Ascending aorta (tissue), 2 donors: ENCODE measurements at regions of chr16 and their contacts with region 1.

Region 1: DNA sequence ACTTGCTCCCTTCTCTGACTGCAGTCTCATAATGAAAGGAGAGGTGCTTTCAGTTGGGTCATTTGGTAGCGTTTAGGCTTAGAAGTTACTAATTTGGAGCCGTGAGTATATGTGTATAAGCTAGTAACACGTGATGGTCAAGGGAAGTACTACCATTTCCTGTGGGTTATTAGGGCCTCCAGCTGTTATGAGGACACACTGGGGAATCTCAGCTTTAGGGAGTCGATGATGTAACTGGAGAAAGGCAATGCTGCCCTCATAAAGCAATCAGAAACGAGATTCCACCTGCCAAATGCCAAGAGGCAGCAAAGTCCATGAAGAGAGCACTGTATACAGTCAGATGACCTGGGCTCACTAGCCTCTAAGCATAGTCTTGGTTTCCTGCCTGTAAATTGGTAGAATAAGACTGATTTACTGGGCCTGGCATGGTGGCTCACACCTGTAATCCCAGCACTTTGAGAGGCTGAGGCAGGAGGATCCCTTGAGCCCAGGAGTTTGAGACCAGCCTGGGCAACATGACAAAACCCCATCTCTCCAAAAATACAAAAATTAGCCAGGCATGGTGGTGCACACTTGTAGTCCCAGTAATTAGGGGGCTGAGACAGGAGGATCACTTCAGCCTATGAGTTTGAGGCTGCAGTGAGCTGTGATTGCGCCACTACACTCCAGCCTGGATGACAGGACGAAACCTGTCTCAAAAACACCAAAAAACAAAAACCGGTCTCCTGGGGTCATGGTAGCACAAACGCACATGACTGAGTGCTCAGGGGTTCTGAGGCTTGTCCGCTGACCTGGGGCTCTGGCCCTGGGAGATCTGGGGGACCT is 53.0 kb downstream of the SF3B3 start:
- DNase-seq: peak in 1 of 2 donors; percentile 46
- H3K4me3 ChIP-seq: no peak overlapping the region
- H3K27ac ChIP-seq: peak overlapping the region; percentile 77 to 79
- H3K4me1 ChIP-seq: peaks cover 15 to 60% of the 10 kb centered on the region in 2 donors
- H3K27me3 ChIP-seq: no peaks in the 10 kb centered on the region
- CTCF ChIP-seq: no peak

Region 2: GRCh38 chr16:70495425-70496182 is 81.0 kb before region 1 on chr16:
- intact Hi-C with region 1: no loop called
- DNase-seq: no peak
- H3K4me3 ChIP-seq: no peak overlapping the region
- H3K27ac ChIP-seq: no peak overlapping the region
- H3K4me1 ChIP-seq: no peaks in the 10 kb centered on the region
- H3K27me3 ChIP-seq: no peaks in the 10 kb centered on the region
- CTCF ChIP-seq: no peak

Region 3: GRCh38 chr16:70529051-70529777 is 47.4 kb before region 1 on chr16:
- intact Hi-C with region 1: loop called (anchors 5 kb)
- DNase-seq: no peak
- H3K4me3 ChIP-seq: no peak overlapping the region
- H3K27ac ChIP-seq: no peak overlapping the region
- H3K4me1 ChIP-seq: peaks cover 8 to 24% of the 10 kb centered on the region in 2 donors
- H3K27me3 ChIP-seq: no peaks in the 10 kb centered on the region
- CTCF ChIP-seq: peak; percentile 37 to 52 (median 51)

Region 4: GRCh38 chr16:70589998-70590471 is 13.4 kb after region 1 on chr16:
- intact Hi-C with region 1: loop called (anchors 1 kb)
- DNase-seq: peak in 1 of 2 donors; percentile 69
- H3K4me3 ChIP-seq: no peak overlapping the region
- H3K27ac ChIP-seq: peak overlapping the region; percentile 89 to 92
- H3K4me1 ChIP-seq: peaks cover 16 to 49% of the 10 kb centered on the region in 2 donors
- H3K27me3 ChIP-seq: no peaks in the 10 kb centered on the region
- CTCF ChIP-seq: no peak

Region 5: GRCh38 chr16:70646260-70647241 is 69.9 kb after region 1 on chr16 and contains the start of gene IL34:
- intact Hi-C with region 1: loop called (anchors 2 kb)
- DNase-seq: peak in 1 of 2 donors; percentile 77
- H3K4me3 ChIP-seq: peak within 1 kb of the TSS; percentile 11 to 48
- H3K27ac ChIP-seq: peak within 1 kb of the TSS; percentile 77 to 78
- H3K4me1 ChIP-seq: peaks cover 6 to 19% of the 10 kb centered on the region in 2 donors
- H3K27me3 ChIP-seq: no peaks in the 10 kb centered on the region
- CTCF ChIP-seq: no peak
- total RNA-seq, gene IL34: 116 TPM